Endothelial cell of umbilical vein (primary cell): ENCODE measurements at regions of chr17 and their contacts with region 1.

Region 1: GRCh38 chr17:45092932-45093430 is 31.9 kb downstream of the NMT1 start:
- DNase-seq: peak; percentile 95
- H3K4me3 ChIP-seq: no peak overlapping the region
- H3K27ac ChIP-seq: peak overlapping the region; percentile 92
- H3K4me1 ChIP-seq: peaks cover 23% of the 10 kb centered on the region
- H3K27me3 ChIP-seq: no peaks in the 10 kb centered on the region
- CTCF ChIP-seq: no peak
- POLR2A ChIP-seq: no peak

Region 2: GRCh38 chr17:45051060-45051719 is 41.8 kb before region 1 on chr17 and contains the start of gene DCAKD:
- CTCF ChIA-PET with region 1: no interaction called
- POLR2A ChIA-PET with region 1: interaction called, 3 read pairs
- dilution Hi-C with region 1: no loop called
- intact Hi-C with region 1: loop called (anchors 5 kb)
- DNase-seq: peak; percentile 95
- H3K4me3 ChIP-seq: peak within 1 kb of the TSS; percentile 69 to 97 (median 95)
- H3K27ac ChIP-seq: peak within 1 kb of the TSS; percentile 97
- H3K4me1 ChIP-seq: peaks cover 16% of the 10 kb centered on the region
- H3K27me3 ChIP-seq: no peaks in the 10 kb centered on the region
- CTCF ChIP-seq: no peak
- POLR2A ChIP-seq: peak; percentile 94
- total RNA-seq, gene DCAKD: 29.0 and 30.8 TPM in 2 replicates

Region 3: DNA sequence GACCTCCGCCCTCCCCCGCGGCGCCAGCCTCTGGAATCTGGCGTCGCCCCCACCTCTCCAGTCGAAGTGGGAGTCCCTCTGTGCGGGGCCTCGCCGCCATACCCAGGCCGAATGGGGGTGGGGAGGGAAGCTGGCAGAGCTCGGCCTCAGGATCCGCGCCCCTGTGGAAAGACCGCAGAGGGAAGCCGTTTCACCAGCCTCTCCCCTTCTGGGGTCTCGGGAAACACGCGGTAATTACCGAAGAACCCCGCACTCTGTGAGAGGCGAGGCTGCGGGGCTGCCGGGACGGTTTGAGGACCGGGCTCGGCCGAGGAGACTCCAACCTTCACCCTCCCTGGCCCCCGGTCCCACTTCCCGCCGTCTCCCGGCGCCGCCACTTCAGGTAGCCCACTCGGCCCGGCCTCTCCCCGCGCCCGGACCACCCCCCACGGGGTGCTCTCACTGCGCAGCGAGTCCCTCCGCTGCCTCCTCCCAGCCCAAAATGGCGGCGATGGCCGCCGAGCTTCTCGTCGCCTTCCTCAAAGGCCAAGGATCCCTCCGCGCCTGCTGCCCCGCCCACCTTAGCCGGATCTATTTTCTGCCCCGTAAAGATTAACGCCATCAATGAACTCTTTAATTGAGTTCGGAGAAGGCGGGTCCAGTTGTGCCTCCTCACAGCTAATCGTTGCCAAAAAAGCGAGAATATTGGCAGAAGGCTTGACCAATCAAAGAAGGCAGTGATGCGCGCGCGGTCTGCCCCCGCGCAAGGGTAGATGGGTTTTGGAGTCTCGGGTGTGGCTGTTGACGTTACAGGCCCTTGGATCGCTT is 68.2 kb after region 1 on chr17:
- CTCF ChIA-PET with region 1: no interaction called
- POLR2A ChIA-PET with region 1: no interaction called
- dilution Hi-C with region 1: no loop called
- intact Hi-C with region 1: no loop called
- DNase-seq: peak; percentile 100
- H3K4me3 ChIP-seq: peak overlapping the region; percentile 60 to 92 (median 80)
- H3K27ac ChIP-seq: peak overlapping the region; percentile 91
- H3K4me1 ChIP-seq: peaks cover 28% of the 10 kb centered on the region
- H3K27me3 ChIP-seq: no peaks in the 10 kb centered on the region
- CTCF ChIP-seq: no peak
- POLR2A ChIP-seq: peak; percentile 94